Cardiac septum (tissue), 1 donor: ENCODE measurements at regions of chr3 and their contacts with region 1.

Region 1: DNA sequence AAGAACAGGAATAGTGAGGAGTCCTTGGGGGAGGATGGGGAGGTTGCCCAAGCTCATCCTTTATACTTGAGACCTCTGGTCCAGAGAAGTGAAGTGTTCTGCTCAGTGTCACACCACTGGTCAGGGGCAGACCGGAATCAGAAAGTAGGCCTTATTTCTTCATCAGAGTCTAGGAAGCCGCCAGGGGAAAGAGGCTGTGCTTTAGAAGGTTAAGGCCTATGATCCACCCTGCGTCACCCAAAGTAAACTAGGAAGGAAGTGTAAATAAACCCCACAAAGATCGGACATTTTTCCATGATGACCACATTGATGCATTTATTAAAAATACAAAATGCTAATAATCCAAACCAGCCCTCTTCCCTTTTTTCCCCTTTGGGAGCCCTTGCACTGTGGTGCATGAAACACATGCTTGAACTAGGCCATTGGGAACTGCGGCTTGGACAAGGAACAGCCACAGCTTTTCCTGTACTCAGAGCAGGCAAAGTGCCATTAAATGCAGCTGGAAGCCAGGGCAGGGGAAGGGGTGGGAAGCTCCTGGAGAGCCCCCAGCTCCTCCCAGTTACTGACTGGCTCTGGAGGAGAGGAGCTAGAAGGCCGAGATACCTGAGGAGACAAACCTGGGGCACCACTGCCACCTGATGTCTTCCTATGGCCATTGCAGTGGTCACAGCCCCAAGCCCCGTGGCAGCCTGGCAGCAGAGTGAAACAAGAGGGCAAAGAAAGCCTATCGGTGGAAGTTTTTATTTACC is 37.0 kb downstream of the CDC25A start:
- DNase-seq: peak; percentile 88

Region 2: DNA sequence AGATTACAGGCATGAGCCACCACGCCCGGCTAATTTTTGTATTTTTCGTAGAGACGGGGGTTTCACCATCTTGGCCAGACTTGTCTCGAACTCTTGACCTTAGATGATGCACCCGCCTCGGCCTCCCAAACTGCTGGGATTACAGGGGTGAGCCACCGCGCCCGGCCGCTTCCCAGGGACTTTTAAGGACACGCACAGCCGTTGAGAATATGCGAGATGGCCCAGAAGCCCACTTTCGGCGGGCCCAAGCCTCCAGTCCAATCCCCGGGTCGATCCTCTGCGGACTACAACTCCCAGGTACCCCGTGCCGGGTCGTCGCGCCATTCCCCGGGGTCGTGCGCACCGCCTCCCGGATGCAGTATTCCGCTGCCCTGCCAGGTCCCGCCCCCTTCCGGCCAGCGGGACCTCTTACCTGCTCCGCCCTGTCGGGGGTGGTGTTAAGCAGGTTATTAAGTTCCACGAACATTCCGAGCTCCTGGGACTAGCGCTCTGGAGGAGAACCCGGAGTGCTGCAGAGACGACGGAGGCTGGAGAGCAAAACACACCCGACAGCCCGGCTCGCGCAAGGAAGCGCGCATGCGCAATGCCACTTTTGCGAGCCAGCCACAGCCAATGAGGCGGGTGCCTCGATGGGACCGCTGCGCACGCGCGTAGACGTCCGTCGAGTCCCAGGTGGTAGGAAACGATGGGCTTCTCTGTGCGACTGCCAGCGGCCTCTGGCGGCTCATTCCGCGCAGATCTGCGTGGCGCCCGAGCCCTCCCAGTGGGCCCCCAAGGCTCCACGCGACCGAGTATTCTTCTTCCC is 637.9 kb before region 1 on chr3 and contains the start of gene ELP6:
- intact Hi-C with region 1: loop called (anchors 10 kb)
- DNase-seq: peak; percentile 98
- total RNA-seq, gene ELP6: 15.8 TPM

Region 3: GRCh38 chr3:47890828-47891612 is 260.2 kb before region 1 on chr3:
- intact Hi-C with region 1: loop called (anchors 5 kb)
- DNase-seq: no peak

Region 4: GRCh38 chr3:47989981-47990440 is 161.2 kb before region 1 on chr3:
- intact Hi-C with region 1: loop called (anchors 5 kb)
- DNase-seq: peak; percentile 78

Region 5: GRCh38 chr3:48088749-48089466 is 62.3 kb before region 1 on chr3:
- intact Hi-C with region 1: loop called (anchors 2 kb)
- DNase-seq: peak; percentile 98

Region 6: DNA sequence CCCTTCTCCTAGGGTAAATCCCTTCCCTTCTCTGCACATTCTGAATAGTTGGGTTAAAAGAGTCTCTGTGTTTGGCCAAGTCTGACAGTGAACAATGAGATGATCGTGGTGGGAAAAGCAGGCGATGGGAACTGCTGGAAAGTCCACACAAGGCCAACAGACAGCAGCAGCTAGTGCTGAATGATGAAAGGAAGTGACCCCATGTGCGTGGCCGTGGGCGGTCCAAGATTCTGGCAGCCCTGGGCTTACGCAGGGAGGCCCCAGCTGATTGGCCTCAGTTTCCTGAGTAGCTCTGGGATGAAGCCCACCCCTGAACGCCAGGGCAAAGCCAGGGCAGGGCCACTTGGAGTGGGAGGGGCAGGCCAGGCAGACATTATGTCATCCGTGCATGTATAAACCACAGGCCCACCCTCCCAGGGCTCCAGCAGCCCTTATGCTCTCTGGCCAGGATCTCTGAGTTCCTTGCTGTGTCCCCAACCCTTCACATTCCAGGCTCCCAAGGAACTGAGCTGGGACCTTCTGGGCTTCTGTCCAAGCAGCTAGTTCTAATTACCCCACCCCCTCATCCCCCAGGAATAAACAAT is 20.8 kb before region 1 on chr3:
- intact Hi-C with region 1: loop called (anchors 2 kb)
- DNase-seq: peak; percentile 88